ENCODE measurements at regions of chr17 and their contacts with region 1.

Region 1: GRCh38 chr17:75109407-75110233 is at the start of gene ARMC7:
- DNase-seq: peak; percentile 91
- ATAC-seq: peak; percentile 80
- H3K4me3 Mint-ChIP-seq: peak within 1 kb of the TSS; percentile 89
- H3K27ac Mint-ChIP-seq: peak within 1 kb of the TSS; percentile 87
- H3K4me1 Mint-ChIP-seq: peaks cover 36% of the 10 kb centered on the region
- H3K27me3 Mint-ChIP-seq: no peaks in the 10 kb centered on the region
- CTCF ChIP-seq: no peak
- total RNA-seq, gene ARMC7: 11.8 and 15.4 TPM in 2 replicates

Region 2: GRCh38 chr17:74961657-74962490 is 147.7 kb before region 1 on chr17:
- CTCF ChIA-PET with region 1: interaction called, 26 read pairs
- POLR2A ChIA-PET with region 1: interaction called, 9 read pairs
- intact Hi-C with region 1: loop called (anchors 1 kb)
- DNase-seq: peak; percentile 71
- ATAC-seq: peak; percentile 69
- H3K4me3 Mint-ChIP-seq: no peak overlapping the region
- H3K27ac Mint-ChIP-seq: no peak overlapping the region
- H3K4me1 Mint-ChIP-seq: peaks cover 9% of the 10 kb centered on the region
- H3K27me3 Mint-ChIP-seq: peaks cover 4% of the 10 kb centered on the region
- CTCF ChIP-seq: peak; percentile 58

Region 3: DNA sequence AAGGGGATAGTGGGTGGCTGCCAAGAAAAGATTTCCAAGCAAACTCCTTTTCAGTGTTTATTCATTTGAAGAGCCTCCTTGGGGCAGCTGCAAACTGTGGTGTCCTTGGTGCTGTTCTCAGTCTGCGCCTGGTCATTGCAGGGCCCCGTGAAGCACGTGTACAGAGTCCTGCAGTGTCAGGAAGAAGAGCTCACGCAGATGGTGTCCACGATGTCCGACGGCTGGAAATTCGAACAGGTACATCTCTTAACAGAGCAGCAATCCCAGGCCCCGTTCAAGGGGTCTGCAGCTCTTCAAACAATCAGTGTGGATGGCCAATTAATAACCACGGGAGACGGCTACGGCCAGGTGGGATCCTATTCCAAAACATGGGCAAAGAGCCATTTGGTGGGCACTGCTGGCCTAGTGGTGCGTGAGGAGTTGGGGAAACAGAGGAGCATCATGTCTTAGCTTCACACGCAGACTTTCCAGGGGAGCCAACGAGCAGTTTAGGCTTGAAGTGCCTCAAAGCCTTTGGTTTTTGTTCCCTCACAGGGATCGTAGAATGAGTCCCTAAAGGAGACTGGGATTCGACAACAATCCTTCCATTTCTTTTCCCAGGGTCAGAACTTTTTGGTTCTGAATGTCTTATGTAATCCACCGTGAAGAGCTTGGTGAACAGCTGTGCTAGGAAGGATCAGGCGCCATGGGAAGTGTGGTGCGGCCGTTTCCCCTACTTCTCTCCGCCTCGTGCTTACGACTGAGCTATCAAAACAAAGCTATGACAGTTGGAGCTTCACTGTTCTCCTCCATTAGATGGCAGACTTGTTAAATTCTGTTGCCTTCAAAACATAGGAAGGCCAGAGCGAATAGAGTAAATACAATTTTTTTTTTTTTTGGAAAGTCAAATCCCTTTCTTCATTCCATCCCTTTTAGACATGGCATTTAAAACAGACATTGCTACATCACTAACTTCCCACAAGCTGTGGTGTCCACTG is 50.0 kb before region 1 on chr17:
- CTCF ChIA-PET with region 1: interaction called, 13 read pairs
- POLR2A ChIA-PET with region 1: interaction called, 3 read pairs
- intact Hi-C with region 1: no loop called
- DNase-seq: no peak
- ATAC-seq: no peak
- H3K4me3 Mint-ChIP-seq: no peak overlapping the region
- H3K27ac Mint-ChIP-seq: no peak overlapping the region
- H3K4me1 Mint-ChIP-seq: no peaks in the 10 kb centered on the region
- H3K27me3 Mint-ChIP-seq: no peaks in the 10 kb centered on the region
- CTCF ChIP-seq: no peak

Region 4: DNA sequence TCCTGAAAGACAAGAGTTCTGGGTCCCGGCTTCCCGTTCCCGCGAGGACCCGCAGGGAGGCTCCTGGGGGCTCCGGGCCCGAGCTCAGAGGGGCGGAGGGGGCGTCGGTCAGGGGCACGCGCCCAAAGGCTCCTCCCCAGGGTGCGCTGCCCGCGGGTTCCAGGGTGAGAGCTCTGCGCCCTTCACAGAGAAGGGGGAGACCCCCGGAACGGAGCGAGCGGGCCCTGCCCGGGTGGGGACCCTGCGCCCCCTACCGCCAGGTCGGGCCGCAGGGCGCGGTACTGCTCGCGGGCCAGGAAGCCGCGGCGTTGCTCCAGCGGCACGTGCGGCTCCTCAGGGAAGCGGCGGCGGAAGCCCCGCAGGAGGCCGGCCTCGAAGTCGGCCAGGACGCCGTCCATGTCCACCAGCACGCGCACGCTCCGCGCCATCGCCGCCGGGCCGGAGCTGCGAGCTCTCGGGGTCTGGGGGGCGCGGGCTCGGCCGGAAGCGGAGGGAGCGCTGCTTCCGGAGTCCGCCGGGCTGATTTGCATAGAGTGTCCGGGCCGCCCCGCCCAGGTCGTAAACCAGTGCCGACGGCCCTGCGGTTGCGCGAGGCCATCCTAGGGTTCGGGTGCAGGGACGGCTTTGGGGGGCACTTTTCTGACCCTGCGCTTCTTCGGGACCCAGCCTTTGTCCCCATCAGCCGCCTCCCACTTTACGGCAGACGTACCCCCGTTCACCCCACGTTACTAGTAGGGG is 21.8 kb after region 1 on chr17 and contains the start of gene NT5C:
- CTCF ChIA-PET with region 1: interaction called, 116 read pairs
- POLR2A ChIA-PET with region 1: interaction called, 292 read pairs
- intact Hi-C with region 1: loop called (anchors 1 kb)
- DNase-seq: peak; percentile 83
- ATAC-seq: peak; percentile 83
- H3K4me3 Mint-ChIP-seq: peak within 1 kb of the TSS; percentile 88
- H3K27ac Mint-ChIP-seq: peak within 1 kb of the TSS; percentile 92
- H3K4me1 Mint-ChIP-seq: peaks cover 28% of the 10 kb centered on the region
- H3K27me3 Mint-ChIP-seq: no peaks in the 10 kb centered on the region
- CTCF ChIP-seq: no peak
- total RNA-seq, gene NT5C: 95.0 and 98.2 TPM in 2 replicates

Region 5: DNA sequence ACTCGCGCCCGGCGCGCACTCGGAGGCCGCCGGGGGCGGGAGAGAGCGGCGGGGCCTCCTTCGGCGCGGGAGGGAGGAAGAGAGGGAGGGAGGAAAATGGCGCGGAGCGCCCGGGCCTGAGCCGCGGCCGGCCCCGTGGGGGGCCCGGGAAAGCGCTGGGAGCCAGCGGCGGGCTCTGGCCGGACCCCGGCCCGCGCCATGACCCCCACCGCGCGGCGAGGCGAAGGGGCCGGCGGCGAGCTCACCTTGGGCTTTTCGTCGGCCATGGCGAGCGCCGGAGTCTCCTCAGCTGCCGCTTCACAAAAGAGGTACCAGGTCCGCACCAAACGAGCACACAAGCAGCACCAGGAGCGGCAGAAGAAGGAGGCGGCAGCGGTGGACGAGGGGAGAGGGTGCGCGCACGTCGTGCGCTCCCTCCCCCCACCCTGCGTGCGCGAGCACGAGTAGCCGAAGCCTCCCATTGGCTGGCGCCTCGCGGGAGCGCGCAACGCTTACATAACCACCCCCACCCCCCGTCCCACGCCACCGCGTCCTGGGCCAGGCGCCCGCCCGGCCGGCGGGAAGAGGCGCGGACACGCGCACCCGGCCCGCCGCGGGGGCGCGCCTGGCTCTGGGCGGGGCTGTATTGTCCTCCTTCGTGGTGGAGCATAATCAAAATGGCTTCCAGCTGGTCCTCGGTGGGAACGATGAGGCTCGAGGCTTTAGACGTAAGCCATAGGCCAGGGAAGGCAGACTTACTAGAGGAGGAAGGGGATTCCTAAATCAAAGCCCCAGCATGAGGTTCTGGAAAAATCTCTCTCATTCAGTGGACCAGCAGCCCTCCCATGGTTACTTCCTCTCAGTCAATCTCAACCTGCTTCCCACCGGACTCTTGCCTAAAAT is 73.2 kb after region 1 on chr17 and contains the start of gene SUMO2:
- CTCF ChIA-PET with region 1: interaction called, 11 read pairs
- POLR2A ChIA-PET with region 1: interaction called, 10 read pairs
- intact Hi-C with region 1: no loop called
- DNase-seq: peak; percentile 96
- ATAC-seq: peak; percentile 82
- H3K4me3 Mint-ChIP-seq: peak within 1 kb of the TSS; percentile 86
- H3K27ac Mint-ChIP-seq: peak within 1 kb of the TSS; percentile 97
- H3K4me1 Mint-ChIP-seq: peaks cover 38% of the 10 kb centered on the region
- H3K27me3 Mint-ChIP-seq: no peaks in the 10 kb centered on the region
- CTCF ChIP-seq: no peak
- total RNA-seq, gene SUMO2: 365 and 394 TPM in 2 replicates

Region 6: GRCh38 chr17:75261336-75262111 is 151.9 kb after region 1 on chr17 and contains the starts of genes GGA3 and MRPS7:
- CTCF ChIA-PET with region 1: interaction called, 5 read pairs
- POLR2A ChIA-PET with region 1: interaction called, 11 read pairs
- intact Hi-C with region 1: loop called (anchors 10 kb)
- DNase-seq: peak; percentile 93
- ATAC-seq: peak; percentile 97
- H3K4me3 Mint-ChIP-seq: peak within 1 kb of the TSS; percentile 99
- H3K27ac Mint-ChIP-seq: peak within 1 kb of the TSS; percentile 99
- H3K4me1 Mint-ChIP-seq: peaks cover 56% of the 10 kb centered on the region
- H3K27me3 Mint-ChIP-seq: no peaks in the 10 kb centered on the region
- CTCF ChIP-seq: no peak
- total RNA-seq, gene GGA3: 116 and 119 TPM in 2 replicates
- total RNA-seq, gene MRPS7: 67.6 and 71.3 TPM in 2 replicates

Region 7: GRCh38 chr17:76578344-76578979 is 1468.8 kb after region 1 on chr17:
- CTCF ChIA-PET with region 1: no interaction called
- POLR2A ChIA-PET with region 1: no interaction called
- intact Hi-C with region 1: no loop called
- DNase-seq: no peak
- ATAC-seq: no peak
- H3K4me3 Mint-ChIP-seq: no peak overlapping the region
- H3K27ac Mint-ChIP-seq: no peak overlapping the region
- H3K4me1 Mint-ChIP-seq: peaks cover 4% of the 10 kb centered on the region
- H3K27me3 Mint-ChIP-seq: peaks cover 5% of the 10 kb centered on the region
- CTCF ChIP-seq: no peak

Measured in activated B cell treated with CpG ODN at 0.5 μM for 24 hours (primary cell).